CD4-positive, alpha-beta T cell (primary cell): ENCODE measurements at regions of chr22 and their contacts with region 1.

Region 1: GRCh38 chr22:41873391-41873790 is 40.5 kb downstream of the SREBF2 start:
- DNase-seq: peak in 5 of 14 experiments; percentile 31 to 72 (median 69)
- ATAC-seq: peak; percentile 80
- H3K4me3 ChIP-seq: no peak overlapping the region
- H3K4me3 Mint-ChIP-seq: peak overlapping the region; percentile 46
- H3K27ac ChIP-seq: peak overlapping the region; percentile 39 to 46
- H3K27ac Mint-ChIP-seq: peak overlapping the region; percentile 89
- H3K4me1 ChIP-seq: peaks cover 15% of the 10 kb centered on the region
- H3K4me1 Mint-ChIP-seq: peaks cover 29% of the 10 kb centered on the region
- H3K27me3 ChIP-seq: no peaks in the 10 kb centered on the region
- H3K27me3 Mint-ChIP-seq: no peaks in the 10 kb centered on the region
- CTCF ChIP-seq: no peak

Region 2: GRCh38 chr22:40525249-40525884 is 1348.0 kb before region 1 on chr22:
- CTCF ChIA-PET with region 1: no interaction called
- POLR2A ChIA-PET with region 1: no interaction called
- intact Hi-C with region 1: no loop called
- DNase-seq: peak; percentile 67 to 85 (median 73)
- ATAC-seq: peak; percentile 82
- H3K4me3 ChIP-seq: no peak overlapping the region
- H3K4me3 Mint-ChIP-seq: no peak overlapping the region
- H3K27ac ChIP-seq: no peak overlapping the region
- H3K27ac Mint-ChIP-seq: peak overlapping the region; percentile 22
- H3K4me1 ChIP-seq: peaks cover 18% of the 10 kb centered on the region
- H3K4me1 Mint-ChIP-seq: peaks cover 55% of the 10 kb centered on the region
- H3K27me3 ChIP-seq: no peaks in the 10 kb centered on the region
- H3K27me3 Mint-ChIP-seq: no peaks in the 10 kb centered on the region
- CTCF ChIP-seq: peak; percentile 97

Region 3: GRCh38 chr22:41891407-41891806 is 18.0 kb after region 1 on chr22:
- CTCF ChIA-PET with region 1: no interaction called
- POLR2A ChIA-PET with region 1: no interaction called
- intact Hi-C with region 1: loop called in 1 of 2 experiments (anchors 2 kb)
- DNase-seq: no peak
- ATAC-seq: no peak
- H3K4me3 ChIP-seq: no peak overlapping the region
- H3K4me3 Mint-ChIP-seq: no peak overlapping the region
- H3K27ac ChIP-seq: no peak overlapping the region
- H3K27ac Mint-ChIP-seq: no peak overlapping the region
- H3K4me1 ChIP-seq: no peaks in the 10 kb centered on the region
- H3K4me1 Mint-ChIP-seq: no peaks in the 10 kb centered on the region
- H3K27me3 ChIP-seq: no peaks in the 10 kb centered on the region
- H3K27me3 Mint-ChIP-seq: no peaks in the 10 kb centered on the region
- CTCF ChIP-seq: no peak